ENCODE measurements at regions of chr4 and their contacts with region 1.

Region 1: GRCh38 chr4:74376888-74377483 is 12.0 kb downstream of the EREG start:
- DNase-seq: no peak
- H3K4me3 ChIP-seq: peak overlapping the region; percentile 55; the same call in 1 of the 2 replicates
- H3K27ac ChIP-seq: peak overlapping the region; percentile 100
- H3K4me1 ChIP-seq: peaks cover 33% of the 10 kb centered on the region
- H3K27me3 ChIP-seq: no peaks in the 10 kb centered on the region
- CTCF ChIP-seq: peak; percentile 70

Region 2: DNA sequence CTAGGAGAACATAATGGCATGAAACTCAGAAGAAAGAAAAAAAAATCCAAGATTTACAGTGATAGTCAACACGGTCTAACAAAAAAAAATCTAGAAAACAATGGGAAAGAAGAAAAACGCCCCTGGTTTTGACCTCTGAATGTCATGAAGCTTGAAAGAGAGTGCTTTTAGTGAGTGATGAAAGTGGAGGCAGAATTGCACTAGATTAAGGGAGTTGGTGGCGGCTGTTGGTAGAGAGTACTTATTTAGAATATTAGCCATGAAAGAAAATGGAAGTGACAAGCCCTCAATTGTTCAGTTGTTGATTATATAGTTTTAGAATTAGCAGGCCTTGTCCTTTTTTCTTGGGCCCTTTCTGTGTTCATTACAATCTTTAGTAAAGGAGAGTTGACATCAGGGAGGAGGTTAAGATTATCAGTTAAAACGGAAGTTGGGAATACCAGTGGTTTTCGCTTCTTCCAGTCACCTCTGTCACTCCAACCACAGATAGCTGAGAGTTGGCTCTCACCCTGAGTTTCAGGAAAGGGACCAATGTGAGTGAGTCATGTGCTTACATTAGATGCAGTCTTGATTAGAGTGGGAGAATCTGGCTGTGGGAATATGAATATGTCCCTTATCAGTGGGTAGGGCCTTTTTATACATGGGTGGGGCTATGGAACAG is 17.6 kb after region 1 on chr4:
- CTCF ChIA-PET with region 1: no interaction called
- POLR2A ChIA-PET with region 1: no interaction called
- intact Hi-C with region 1: loop called (anchors 2 kb)
- DNase-seq: peak; percentile 40 to 58
- H3K4me3 ChIP-seq: no peak overlapping the region
- H3K27ac ChIP-seq: 0 out of 2 replicates have a peak overlapping the region, but pooled peaks have one; percentile 16
- H3K4me1 ChIP-seq: no peaks in the 10 kb centered on the region; the same call in 1 of the 2 replicates
- H3K27me3 ChIP-seq: no peaks in the 10 kb centered on the region
- CTCF ChIP-seq: no peak

Region 3: GRCh38 chr4:74451200-74451661 is 74.2 kb after region 1 on chr4:
- CTCF ChIA-PET with region 1: interaction called, 3 read pairs
- POLR2A ChIA-PET with region 1: no interaction called
- intact Hi-C with region 1: loop called (anchors 2 kb)
- DNase-seq: peak; percentile 14 to 62
- H3K4me3 ChIP-seq: no peak overlapping the region
- H3K27ac ChIP-seq: peak overlapping the region; percentile 63
- H3K4me1 ChIP-seq: peaks cover 24% of the 10 kb centered on the region
- H3K27me3 ChIP-seq: no peaks in the 10 kb centered on the region
- CTCF ChIP-seq: no peak